ENCODE measurements at regions of chr5 and their contacts with region 1.

Region 1: DNA sequence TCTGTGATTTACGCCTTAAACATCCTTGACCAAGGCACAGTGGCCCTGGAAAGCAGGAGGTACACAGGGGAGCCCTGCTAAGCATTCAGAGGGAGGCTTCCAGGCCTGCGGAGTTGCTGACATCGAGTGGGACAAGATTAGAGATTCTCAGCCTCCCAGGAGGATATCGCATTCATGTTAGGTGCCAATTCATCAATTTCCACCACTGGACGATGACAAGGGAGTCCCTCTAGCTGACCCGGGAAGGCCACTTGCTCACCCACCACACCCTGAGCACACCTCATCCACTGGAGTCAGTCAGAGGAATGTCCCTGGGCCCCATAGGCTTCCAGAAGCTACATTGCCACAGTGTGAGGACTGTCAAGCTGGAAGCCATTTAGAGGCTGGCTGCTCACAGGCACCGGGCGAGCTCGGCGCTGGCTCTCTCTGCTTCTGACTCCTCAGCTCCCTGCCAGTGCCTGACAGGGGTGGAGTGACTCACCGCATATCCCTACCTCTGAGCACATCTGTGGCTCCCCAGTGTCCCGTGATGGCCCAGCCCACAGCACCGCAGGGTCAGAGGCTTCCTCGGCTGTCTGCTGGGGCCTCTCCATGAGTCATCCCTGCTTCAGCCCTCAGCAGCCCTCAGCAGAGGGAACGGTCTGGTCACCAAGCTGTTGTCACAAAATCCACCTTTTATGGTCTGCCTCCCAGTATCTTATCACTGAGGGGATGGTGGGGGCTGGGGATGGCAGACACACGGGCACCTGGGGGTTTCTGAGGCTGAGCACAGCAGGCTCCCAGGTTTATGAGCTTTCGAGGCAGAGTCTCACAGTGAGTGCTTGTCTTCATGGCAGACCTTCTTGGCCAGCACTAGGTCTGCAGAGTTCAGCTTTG is 117.5 kb downstream of the ZNF608 start:
- DNase-seq: peak; percentile 85 to 86
- H3K4me3 ChIP-seq: peak overlapping the region; percentile 27; the same call in 1 of the 2 replicates
- H3K27ac ChIP-seq: peak overlapping the region; percentile 24
- H3K4me1 ChIP-seq: peaks cover 30% of the 10 kb centered on the region
- H3K27me3 ChIP-seq: no peaks in the 10 kb centered on the region
- CTCF ChIP-seq: no peak

Region 2: DNA sequence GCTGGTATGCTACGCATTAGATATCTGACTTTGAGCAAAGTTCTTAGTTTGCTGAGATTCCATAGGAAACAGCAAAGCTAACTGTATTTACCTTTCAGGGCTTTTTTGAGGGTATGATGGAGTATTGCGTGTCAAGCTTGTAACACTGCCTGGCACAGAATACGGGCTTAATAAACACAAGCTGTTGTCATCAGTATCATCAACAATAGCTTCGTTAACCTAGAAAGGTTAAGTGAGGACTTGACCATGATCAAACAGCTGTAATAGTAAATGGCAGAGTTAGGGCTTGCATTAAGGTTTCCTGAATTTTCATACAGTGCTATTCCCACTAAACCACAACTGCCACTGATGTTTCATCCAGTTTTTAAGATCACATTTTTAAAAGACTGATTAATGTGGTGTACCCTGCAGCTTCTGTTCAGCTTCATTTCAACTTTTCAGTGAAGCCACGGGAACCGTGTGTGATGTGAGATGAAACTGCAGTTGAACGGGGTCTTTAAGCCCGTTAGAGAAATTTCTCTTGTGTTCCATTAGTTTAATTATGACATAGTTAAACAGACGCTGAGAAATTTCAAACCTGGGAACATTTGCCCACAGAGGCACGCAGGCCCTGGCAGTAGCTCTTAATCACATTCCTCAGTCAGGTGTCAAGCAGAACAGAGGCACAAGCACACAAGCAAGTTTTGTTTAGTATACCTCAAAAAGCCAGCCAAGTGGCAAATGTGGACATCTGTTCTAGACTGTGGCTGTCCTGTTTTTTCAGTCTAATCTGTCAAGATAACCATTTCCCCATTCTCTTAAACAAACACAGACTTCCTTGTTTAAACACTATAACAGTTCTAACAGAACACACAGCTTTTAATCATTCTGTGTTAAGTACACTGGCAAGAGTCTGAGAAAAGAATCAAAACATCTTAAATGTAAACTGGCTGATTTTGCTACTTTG is 29.7 kb before region 1 on chr5:
- CTCF ChIA-PET with region 1: no interaction called
- POLR2A ChIA-PET with region 1: no interaction called
- intact Hi-C with region 1: loop called (anchors 1 kb)
- DNase-seq: peak; percentile 41 to 87
- H3K4me3 ChIP-seq: no peak overlapping the region
- H3K27ac ChIP-seq: peak overlapping the region; percentile 45
- H3K4me1 ChIP-seq: peaks cover 36% of the 10 kb centered on the region
- H3K27me3 ChIP-seq: no peaks in the 10 kb centered on the region
- CTCF ChIP-seq: no peak